G401 (cell line): ENCODE measurements at regions of chr4 and their contacts with region 1.

Region 1: GRCh38 chr4:4269856-4270255 is 20.1 kb downstream of the LYAR start:
- DNase-seq: no peak

Region 2: DNA sequence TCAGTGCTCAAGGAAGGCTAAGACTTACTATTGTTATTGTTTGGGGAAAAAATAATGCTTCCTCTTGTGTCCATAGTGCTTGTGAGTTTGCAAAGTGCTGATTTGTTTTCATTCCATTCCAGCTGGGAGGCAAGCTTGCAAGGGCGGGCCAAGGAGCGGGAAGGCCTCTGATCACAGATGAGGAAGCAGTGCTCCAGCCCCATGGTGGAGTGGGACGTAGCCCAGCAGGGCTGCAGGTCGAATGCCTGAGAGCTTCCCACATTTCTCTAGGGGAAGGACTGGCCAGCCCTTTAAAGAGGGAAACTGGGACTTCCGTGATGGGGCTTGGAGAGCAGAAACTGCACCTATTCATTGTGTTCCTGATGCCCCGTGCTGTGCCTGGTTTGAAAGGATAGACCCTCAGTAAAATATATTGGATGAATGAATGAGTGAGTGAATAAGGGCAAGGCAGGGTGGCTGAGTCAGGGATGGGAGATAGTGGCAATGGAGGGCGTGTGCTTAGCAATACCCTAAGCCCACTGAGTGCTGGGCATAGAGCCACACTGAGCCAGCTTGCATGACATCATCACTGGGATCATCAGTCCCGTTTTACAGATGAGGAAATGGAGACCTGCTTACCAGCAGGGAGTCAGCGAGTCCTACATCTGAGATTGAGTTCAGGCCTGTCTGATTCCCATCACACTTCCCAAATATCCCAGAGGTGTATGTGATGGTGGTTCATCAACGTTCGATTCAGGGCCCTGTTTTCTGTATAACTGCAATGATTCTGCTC is 99.1 kb after region 1 on chr4:
- in situ Hi-C with region 1: loop called (anchors 5 kb)
- DNase-seq: no peak